ENCODE measurements at regions of chr17 and their contacts with region 1.

Region 1: DNA sequence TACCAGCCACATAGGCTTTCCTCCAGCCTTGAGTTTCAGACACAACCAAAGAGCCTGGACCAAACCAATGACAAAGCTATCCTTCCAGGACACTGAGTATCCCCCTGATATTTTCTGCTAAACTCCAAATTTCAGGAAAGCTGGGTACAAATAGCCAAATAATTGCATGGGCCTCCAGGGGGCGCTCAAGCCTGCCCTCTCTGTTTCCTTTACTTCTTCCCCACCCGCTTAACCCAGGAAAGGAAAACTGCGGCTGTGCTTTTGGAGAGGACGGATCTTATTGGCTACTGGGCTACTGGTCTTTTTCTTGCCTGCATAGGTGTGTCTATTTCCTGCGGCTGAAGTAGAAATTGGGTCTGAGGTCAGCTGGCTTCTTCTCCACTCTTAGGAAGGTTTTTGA is 30.1 kb downstream of the GNGT2 start:
- DNase-seq: peak; percentile 74
- H3K4me3 ChIP-seq: no peak overlapping the region
- H3K27ac ChIP-seq: no peak overlapping the region
- H3K4me1 ChIP-seq: no peaks in the 10 kb centered on the region
- H3K27me3 ChIP-seq: no peaks in the 10 kb centered on the region
- CTCF ChIP-seq: peak; percentile 67 to 84 (median 73)
- EP300 ChIP-seq: no peak
- POLR2A ChIP-seq: no peak

Region 2: DNA sequence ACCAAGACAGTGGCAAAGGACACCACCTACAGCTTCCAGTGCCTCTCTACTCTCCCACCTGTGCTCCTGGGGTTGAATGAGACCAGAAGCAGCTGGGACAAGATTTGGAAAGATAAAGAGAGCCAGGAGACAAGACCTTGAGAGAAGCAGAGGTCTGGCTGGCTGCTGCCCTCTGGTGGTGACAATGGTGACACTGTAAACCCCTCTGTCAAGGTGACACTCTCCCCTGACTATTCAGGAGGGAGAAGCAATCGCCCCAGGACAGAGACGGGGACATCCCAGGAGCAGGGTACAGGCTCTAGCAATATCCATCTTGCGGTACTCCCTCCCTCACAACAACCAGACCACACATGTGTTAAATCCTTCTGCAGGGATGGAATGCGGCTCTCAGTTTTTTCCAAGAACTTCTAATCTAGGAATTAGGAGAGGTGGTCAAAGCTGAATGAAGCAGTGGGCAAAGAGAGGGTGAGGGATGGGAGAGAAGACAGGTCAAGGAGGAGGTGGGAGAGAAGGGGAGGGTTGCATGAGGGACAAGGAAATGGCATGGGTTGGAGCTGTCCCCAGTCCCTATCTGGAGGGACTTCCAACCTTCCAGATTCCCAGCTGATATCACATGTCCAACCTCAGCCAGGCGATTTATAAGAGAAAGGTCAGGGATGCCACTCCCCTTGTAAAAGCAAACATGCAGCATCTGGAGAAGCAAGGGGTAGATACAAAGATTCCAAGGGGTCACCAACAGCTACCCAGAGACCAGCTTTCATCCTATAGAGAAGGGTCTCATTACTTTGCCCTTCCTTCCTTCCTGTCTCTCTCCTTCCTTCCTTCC is 47.3 kb after region 1 on chr17:
- in situ Hi-C with region 1: loop called in 2 of 4 experiments (anchors 5 kb)
- intact Hi-C with region 1: loop called (anchors 5 kb)
- DNase-seq: peak; percentile 85
- H3K4me3 ChIP-seq: no peak overlapping the region
- H3K27ac ChIP-seq: no peak overlapping the region
- H3K4me1 ChIP-seq: peaks cover 22 to 41% (median 31%) of the 10 kb centered on the region in 4 donors
- H3K27me3 ChIP-seq: peaks cover 53% of the 10 kb centered on the region
- CTCF ChIP-seq: peak; percentile 78 to 84 (median 83)
- EP300 ChIP-seq: no peak
- POLR2A ChIP-seq: no peak

Measured in transverse colon (tissue), 4 donors.